ENCODE measurements at regions of chr10 and their contacts with region 1.

Region 1: GRCh38 chr10:60114765-60115586 is 208.6 kb upstream of the CCDC6 start:
- DNase-seq: peak; percentile 35 to 58
- ATAC-seq: peak; percentile 59 to 80; a peak in 5 of 6 replicates
- H3K4me3 ChIP-seq: no peak overlapping the region
- H3K27ac ChIP-seq: no peak overlapping the region
- H3K4me1 ChIP-seq: 0 out of 3 replicates have a peak, but pooled peaks cover 4% of the 10 kb centered on the region
- CTCF ChIP-seq: peak; percentile 77
- EP300 ChIP-seq: no peak
- POLR2A ChIP-seq: no peak
- RAD21 ChIP-seq: peak; percentile 81 to 87

Region 2: GRCh38 chr10:60099998-60100747 is 14.8 kb before region 1 on chr10:
- CTCF ChIA-PET with region 1: interaction called, 34 read pairs
- POLR2A ChIA-PET with region 1: no interaction called
- DNase-seq: peak; percentile 24 to 64
- ATAC-seq: peak; percentile 59 to 80; a peak in 4 of 6 replicates
- H3K4me3 ChIP-seq: no peak overlapping the region
- H3K27ac ChIP-seq: no peak overlapping the region
- H3K4me1 ChIP-seq: peaks cover 10% of the 10 kb centered on the region; the same call in 2 of the 3 replicates
- CTCF ChIP-seq: peak; percentile 83
- EP300 ChIP-seq: no peak
- POLR2A ChIP-seq: no peak
- RAD21 ChIP-seq: peak; percentile 79 to 82

Region 3: GRCh38 chr10:60130130-60130579 is 15.2 kb after region 1 on chr10:
- CTCF ChIA-PET with region 1: interaction called, 18 read pairs
- POLR2A ChIA-PET with region 1: no interaction called
- DNase-seq: peak in 1 of 2 experiments; percentile 19
- ATAC-seq: peak in 1 of 2 experiments; percentile 28; a peak in 1 of 6 replicates
- H3K4me3 ChIP-seq: no peak overlapping the region
- H3K27ac ChIP-seq: peak overlapping the region; percentile 51 to 52; a peak in 4 of 6 replicates
- H3K4me1 ChIP-seq: peaks cover 14% of the 10 kb centered on the region
- CTCF ChIP-seq: no peak
- EP300 ChIP-seq: no peak
- POLR2A ChIP-seq: no peak
- RAD21 ChIP-seq: no peak

Region 4: DNA sequence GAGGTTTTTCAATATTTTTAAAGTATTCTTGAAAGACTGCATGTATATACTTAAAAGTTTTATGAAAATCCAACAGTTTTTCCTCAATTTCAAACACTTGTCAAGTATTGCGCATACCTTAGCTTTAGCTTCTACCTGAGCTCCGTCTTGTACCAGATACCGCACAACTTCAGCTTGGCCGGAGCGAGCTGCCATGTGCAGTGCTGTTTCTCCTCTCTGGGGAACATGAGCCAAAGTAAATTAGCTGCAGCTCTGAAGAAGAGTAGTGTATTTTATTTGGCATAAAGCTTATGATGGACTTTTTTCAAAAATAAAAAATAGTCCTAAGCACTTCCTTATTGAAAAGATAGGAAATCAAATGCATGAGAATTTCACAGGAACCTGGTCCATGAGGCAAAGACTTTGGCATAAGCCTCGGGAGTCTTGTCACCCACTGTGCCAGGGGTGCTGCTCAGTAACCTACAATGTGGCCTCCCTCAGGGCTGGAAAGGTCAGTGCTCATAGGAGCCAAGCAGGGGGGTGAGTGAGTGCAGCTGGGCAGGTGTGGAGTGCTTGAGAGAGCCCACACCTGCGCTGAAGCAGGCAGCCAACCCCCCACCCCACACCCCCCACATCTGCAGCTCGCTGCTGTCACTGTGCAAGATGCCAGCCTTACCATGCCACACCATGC is 85.2 kb after region 1 on chr10:
- CTCF ChIA-PET with region 1: interaction called, 147 read pairs
- POLR2A ChIA-PET with region 1: no interaction called
- DNase-seq: no peak
- ATAC-seq: no peak
- H3K4me3 ChIP-seq: no peak overlapping the region
- H3K27ac ChIP-seq: no peak overlapping the region
- H3K4me1 ChIP-seq: no peaks in the 10 kb centered on the region
- CTCF ChIP-seq: no peak
- EP300 ChIP-seq: no peak
- POLR2A ChIP-seq: no peak
- RAD21 ChIP-seq: no peak

Measured in A549 (cell line).